CD8-positive, alpha-beta T cell (primary cell): ENCODE measurements at regions of chr14 and their contacts with region 1.

Region 1: GRCh38 chr14:61730756-61731373 is 31.4 kb upstream of the SNAPC1 start:
- DNase-seq: peak in 3 of 9 experiments; percentile 19 to 58 (median 51)
- ATAC-seq: no peak
- H3K4me3 ChIP-seq: no peak overlapping the region
- H3K4me3 Mint-ChIP-seq: no peak overlapping the region
- H3K27ac ChIP-seq: no peak overlapping the region
- H3K27ac Mint-ChIP-seq: peak overlapping the region; percentile 42
- H3K4me1 ChIP-seq: peaks cover 3% of the 10 kb centered on the region
- H3K4me1 Mint-ChIP-seq: peaks cover 20% of the 10 kb centered on the region
- H3K27me3 ChIP-seq: no peaks in the 10 kb centered on the region
- H3K27me3 Mint-ChIP-seq: no peaks in the 10 kb centered on the region
- CTCF ChIP-seq: peak; percentile 73

Region 2: DNA sequence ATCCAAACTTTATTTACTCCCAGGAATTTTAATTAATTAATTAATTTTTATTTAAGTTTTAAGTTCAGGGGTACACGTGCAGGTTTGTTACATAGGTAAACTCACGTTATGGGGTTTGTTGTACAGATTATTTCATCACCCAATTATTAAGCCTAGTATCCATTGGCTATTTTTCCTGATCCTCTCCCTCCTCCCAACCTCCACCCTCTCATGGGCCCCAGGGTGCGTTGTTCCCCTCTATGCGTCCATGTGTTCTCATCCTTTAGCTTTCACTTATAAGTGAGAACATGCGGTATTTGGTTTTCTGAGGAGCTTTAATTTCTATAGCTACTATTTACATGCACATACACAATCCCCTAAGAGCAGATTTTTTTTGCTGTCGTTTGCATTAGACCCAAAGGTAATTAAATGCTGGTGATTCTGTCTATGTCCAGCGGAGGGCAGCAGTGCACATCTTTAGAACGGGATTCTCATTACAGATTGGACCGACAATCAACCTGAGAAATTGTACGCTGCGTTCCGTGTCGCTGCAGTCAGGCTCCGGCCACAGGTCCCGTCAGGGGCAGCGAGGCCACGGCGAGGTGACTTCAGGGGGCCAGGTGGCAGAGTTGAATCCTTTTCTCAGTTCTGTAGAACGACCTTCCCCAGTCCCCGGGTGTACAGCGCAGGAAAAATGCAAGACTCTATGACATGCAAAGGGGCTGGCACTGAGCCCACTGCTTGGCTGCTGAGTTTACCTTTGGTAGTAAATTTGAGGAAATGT is 461.4 kb before region 1 on chr14:
- CTCF ChIA-PET with region 1: interaction called, 5 read pairs
- POLR2A ChIA-PET with region 1: no interaction called
- intact Hi-C with region 1: loop called (anchors 1 kb)
- DNase-seq: peak; percentile 63 to 87 (median 76)
- ATAC-seq: peak; percentile 96
- H3K4me3 ChIP-seq: peak overlapping the region; percentile 27 to 46
- H3K4me3 Mint-ChIP-seq: peak overlapping the region; percentile 75
- H3K27ac ChIP-seq: no peak overlapping the region
- H3K27ac Mint-ChIP-seq: no peak overlapping the region
- H3K4me1 ChIP-seq: no peaks in the 10 kb centered on the region
- H3K4me1 Mint-ChIP-seq: peaks cover 4% of the 10 kb centered on the region
- H3K27me3 ChIP-seq: peaks cover 0 to 4% of the 10 kb centered on the region in 2 experiments
- H3K27me3 Mint-ChIP-seq: peaks cover 38% of the 10 kb centered on the region
- CTCF ChIP-seq: peak; percentile 96